Activated CD4-positive, alpha-beta T cell treated with anti-CD3 and anti-CD28 coated beads for 36 hours (primary cell): ENCODE measurements at regions of chr1 and their contacts with region 1.

Region 1: GRCh38 chr1:8702850-8703810 is 114.3 kb downstream of the RERE start:
- DNase-seq: peak; percentile 85
- ATAC-seq: peak; percentile 45
- H3K4me3 Mint-ChIP-seq: peak overlapping the region; percentile 83
- H3K27ac Mint-ChIP-seq: peak overlapping the region; percentile 76
- H3K4me1 Mint-ChIP-seq: peaks cover 32% of the 10 kb centered on the region
- H3K27me3 Mint-ChIP-seq: peaks cover 31% of the 10 kb centered on the region

Region 2: GRCh38 chr1:7961216-7962015 is 741.7 kb before region 1 on chr1 and contains the start of gene PARK7:
- CTCF ChIA-PET with region 1: no interaction called
- POLR2A ChIA-PET with region 1: no interaction called
- intact Hi-C with region 1: no loop called
- DNase-seq: peak; percentile 100
- ATAC-seq: peak; percentile 98
- H3K4me3 Mint-ChIP-seq: peak within 1 kb of the TSS; percentile 100
- H3K27ac Mint-ChIP-seq: peak within 1 kb of the TSS; percentile 100
- H3K4me1 Mint-ChIP-seq: peaks cover 49% of the 10 kb centered on the region
- H3K27me3 Mint-ChIP-seq: no peaks in the 10 kb centered on the region
- total RNA-seq, gene PARK7: 294 to 390 TPM

Region 3: GRCh38 chr1:8396786-8397406 is 306.2 kb before region 1 on chr1:
- CTCF ChIA-PET with region 1: no interaction called
- POLR2A ChIA-PET with region 1: no interaction called
- intact Hi-C with region 1: loop called in 1 of 2 experiments (anchors 2 kb)
- DNase-seq: peak; percentile 68
- ATAC-seq: peak; percentile 84
- H3K4me3 Mint-ChIP-seq: peak overlapping the region; percentile 25
- H3K27ac Mint-ChIP-seq: peak overlapping the region; percentile 81
- H3K4me1 Mint-ChIP-seq: peaks cover 72% of the 10 kb centered on the region
- H3K27me3 Mint-ChIP-seq: no peaks in the 10 kb centered on the region

Region 4: GRCh38 chr1:8516793-8517556 is 186.2 kb before region 1 on chr1:
- CTCF ChIA-PET with region 1: no interaction called
- POLR2A ChIA-PET with region 1: no interaction called
- intact Hi-C with region 1: no loop called
- DNase-seq: peak; percentile 64
- ATAC-seq: peak; percentile 70
- H3K4me3 Mint-ChIP-seq: peak overlapping the region; percentile 30
- H3K27ac Mint-ChIP-seq: peak overlapping the region; percentile 78
- H3K4me1 Mint-ChIP-seq: peaks cover 58% of the 10 kb centered on the region
- H3K27me3 Mint-ChIP-seq: no peaks in the 10 kb centered on the region

Region 5: DNA sequence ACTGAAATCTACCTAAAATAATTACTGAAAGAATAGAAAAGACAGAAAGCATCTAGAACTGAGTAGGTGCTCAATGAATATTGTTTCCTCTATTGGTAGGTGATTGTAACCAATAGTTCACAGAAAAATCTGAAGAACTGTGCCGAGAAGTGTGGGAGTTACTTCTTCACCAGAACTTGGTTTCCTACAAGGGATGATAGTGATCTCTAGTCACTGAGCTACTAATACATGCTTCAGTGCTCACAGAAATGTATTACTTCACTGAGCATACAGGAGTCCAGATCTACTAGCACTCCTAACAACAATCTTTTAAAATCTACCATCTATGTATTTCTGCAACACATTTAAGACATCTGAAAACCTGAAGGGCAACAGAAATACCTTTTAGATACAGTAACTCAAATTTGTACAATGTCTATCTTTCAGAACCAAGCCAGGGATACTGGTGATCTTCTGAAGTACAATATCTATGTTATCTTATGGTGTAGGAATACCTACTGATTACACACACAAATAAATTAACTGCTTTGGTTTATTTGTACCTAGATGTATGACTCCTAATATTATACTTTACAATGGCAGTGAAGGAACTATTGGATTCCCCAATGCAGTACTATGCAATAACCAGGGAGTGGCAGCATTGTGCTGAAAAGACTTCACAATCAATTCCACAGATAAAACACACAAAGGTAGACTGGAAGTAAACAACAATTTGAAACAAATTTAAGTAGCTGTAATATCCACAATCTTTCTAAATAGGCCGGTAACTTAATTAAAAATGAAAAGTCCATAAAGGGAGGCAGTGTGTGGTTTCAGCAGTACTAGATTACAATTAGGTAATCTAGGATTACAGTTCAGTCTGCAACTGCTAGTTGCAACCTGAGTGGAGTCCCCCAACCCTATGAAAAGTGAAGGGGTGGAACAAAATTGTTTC is 142.3 kb before region 1 on chr1:
- CTCF ChIA-PET with region 1: interaction called, 20 read pairs
- POLR2A ChIA-PET with region 1: no interaction called
- intact Hi-C with region 1: loop called (anchors 1 kb)
- DNase-seq: peak; percentile 34
- ATAC-seq: peak; percentile 80
- H3K4me3 Mint-ChIP-seq: no peak overlapping the region
- H3K27ac Mint-ChIP-seq: peak overlapping the region; percentile 56
- H3K4me1 Mint-ChIP-seq: peaks cover 49% of the 10 kb centered on the region
- H3K27me3 Mint-ChIP-seq: no peaks in the 10 kb centered on the region

Region 6: GRCh38 chr1:8660411-8660828 is 42.7 kb before region 1 on chr1:
- CTCF ChIA-PET with region 1: interaction called, 3 read pairs
- POLR2A ChIA-PET with region 1: no interaction called
- intact Hi-C with region 1: loop called in 1 of 2 experiments (anchors 5 kb)
- DNase-seq: peak; percentile 24
- ATAC-seq: no peak
- H3K4me3 Mint-ChIP-seq: no peak overlapping the region
- H3K27ac Mint-ChIP-seq: no peak overlapping the region
- H3K4me1 Mint-ChIP-seq: peaks cover 4% of the 10 kb centered on the region
- H3K27me3 Mint-ChIP-seq: no peaks in the 10 kb centered on the region

Region 7: GRCh38 chr1:8689431-8690252 is 13.5 kb before region 1 on chr1:
- CTCF ChIA-PET with region 1: interaction called, 11 read pairs
- POLR2A ChIA-PET with region 1: no interaction called
- intact Hi-C with region 1: no loop called
- DNase-seq: no peak
- ATAC-seq: no peak
- H3K4me3 Mint-ChIP-seq: no peak overlapping the region
- H3K27ac Mint-ChIP-seq: no peak overlapping the region
- H3K4me1 Mint-ChIP-seq: peaks cover 22% of the 10 kb centered on the region
- H3K27me3 Mint-ChIP-seq: no peaks in the 10 kb centered on the region